ENCODE measurements at regions of chr6 and their contacts with region 1.

Region 1: DNA sequence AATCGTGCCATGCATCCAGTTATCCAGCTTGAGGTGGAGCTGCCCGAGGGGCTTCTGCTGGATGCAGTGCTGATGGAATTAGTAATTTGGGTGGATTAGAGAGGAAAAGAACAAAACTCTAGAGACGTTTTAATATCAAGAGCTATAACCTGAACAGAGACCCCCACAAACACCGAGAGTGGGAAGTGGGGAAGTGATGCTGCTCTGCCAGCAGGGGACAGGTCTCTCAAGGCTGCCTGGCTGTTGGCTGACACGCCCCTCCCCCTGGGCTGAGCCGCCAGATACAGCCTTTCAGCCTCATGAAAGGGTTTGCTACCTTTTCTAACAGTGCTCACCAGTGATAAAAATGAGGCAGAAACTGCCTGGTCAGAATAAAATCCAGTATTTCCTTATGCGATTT is 9.6 kb downstream of the LEMD2 start:
- DNase-seq: no peak
- H3K4me3 ChIP-seq: no peak overlapping the region
- H3K27ac ChIP-seq: no peak overlapping the region
- H3K4me1 ChIP-seq: peaks cover 31% of the 10 kb centered on the region
- H3K27me3 ChIP-seq: no peaks in the 10 kb centered on the region
- CTCF ChIP-seq: no peak

Region 2: GRCh38 chr6:33505548-33506370 is 273.5 kb before region 1 on chr6:
- CTCF ChIA-PET with region 1: no interaction called
- POLR2A ChIA-PET with region 1: no interaction called
- intact Hi-C with region 1: no loop called
- DNase-seq: peak; percentile 2 to 42
- H3K4me3 ChIP-seq: no peak overlapping the region
- H3K27ac ChIP-seq: no peak overlapping the region
- H3K4me1 ChIP-seq: peaks cover 11% of the 10 kb centered on the region
- H3K27me3 ChIP-seq: no peaks in the 10 kb centered on the region
- CTCF ChIP-seq: no peak

Region 3: GRCh38 chr6:34036357-34037069 is 257.2 kb after region 1 on chr6:
- CTCF ChIA-PET with region 1: no interaction called
- POLR2A ChIA-PET with region 1: interaction called, 11 read pairs
- intact Hi-C with region 1: no loop called
- DNase-seq: no peak
- H3K4me3 ChIP-seq: no peak overlapping the region
- H3K27ac ChIP-seq: no peak overlapping the region
- H3K4me1 ChIP-seq: no peaks in the 10 kb centered on the region
- H3K27me3 ChIP-seq: peaks cover 86% of the 10 kb centered on the region
- CTCF ChIP-seq: no peak

Region 4: DNA sequence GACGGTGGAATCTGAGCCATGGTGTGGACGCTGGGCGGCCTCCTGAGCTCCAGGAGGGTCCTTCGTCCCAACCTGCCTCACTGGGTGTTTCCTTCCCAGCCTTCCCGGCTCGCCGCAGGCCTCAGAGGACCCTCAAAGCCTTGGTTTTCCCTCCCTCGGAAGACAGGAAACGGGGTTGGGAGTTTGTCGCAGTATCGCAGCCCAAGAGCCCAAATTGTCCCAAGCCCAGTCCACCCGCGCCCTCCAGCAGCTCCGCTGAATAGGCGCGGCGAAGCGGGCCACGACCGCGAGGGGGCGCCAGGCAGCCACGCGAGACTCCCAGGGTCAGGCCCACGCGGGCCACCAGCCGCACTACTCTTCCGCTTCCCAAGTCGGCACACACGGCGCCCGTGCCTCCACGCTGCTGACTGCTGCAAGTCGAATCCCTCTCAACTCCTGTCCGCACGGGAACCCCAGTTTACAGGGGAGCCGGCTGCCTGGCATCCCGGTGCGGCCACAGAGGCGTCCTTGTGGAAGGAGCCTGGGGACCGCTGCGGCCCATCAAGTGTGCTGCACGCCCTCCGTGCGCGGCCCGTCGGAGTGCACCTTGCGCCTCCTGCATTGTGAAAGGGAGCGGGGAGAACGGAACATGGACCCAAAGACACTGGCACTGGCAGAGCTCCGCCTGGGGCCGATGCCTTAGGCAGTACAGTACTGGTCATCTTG is 417.0 kb after region 1 on chr6:
- CTCF ChIA-PET with region 1: no interaction called
- POLR2A ChIA-PET with region 1: no interaction called
- intact Hi-C with region 1: no loop called
- DNase-seq: peak; percentile 38 to 82
- H3K4me3 ChIP-seq: peak overlapping the region; percentile 55
- H3K27ac ChIP-seq: no peak overlapping the region
- H3K4me1 ChIP-seq: peaks cover 11% of the 10 kb centered on the region
- H3K27me3 ChIP-seq: no peaks in the 10 kb centered on the region
- CTCF ChIP-seq: peak; percentile 94

Measured in PC-9 (cell line).